Head of caudate nucleus (tissue), 42 donors: ENCODE measurements at regions of chr10 and their contacts with region 1.

Region 1: GRCh38 chr10:126156012-126156411 is 232.3 kb downstream of the ADAM12 start:
- DNase-seq: peak in 2 of 42 donors; percentile 27 to 28

Region 2: GRCh38 chr10:125990974-125991791 is 164.8 kb before region 1 on chr10:
- intact Hi-C with region 1: loop called (anchors 5 kb)
- DNase-seq: no peak

Region 3: GRCh38 chr10:126256881-126257280 is 100.9 kb after region 1 on chr10:
- intact Hi-C with region 1: no loop called
- DNase-seq: no peak

Region 4: GRCh38 chr10:126331101-126331500 is 175.1 kb after region 1 on chr10:
- intact Hi-C with region 1: no loop called
- DNase-seq: no peak